Endothelial cell of umbilical vein (primary cell): ENCODE measurements at regions of chr6 and their contacts with region 1.

Region 1: GRCh38 chr6:157514659-157515496 is 133.9 kb downstream of the ZDHHC14 start:
- DNase-seq: peak; percentile 99
- H3K4me3 ChIP-seq: no peak overlapping the region
- H3K27ac ChIP-seq: peak overlapping the region; percentile 88
- H3K4me1 ChIP-seq: peaks cover 29% of the 10 kb centered on the region
- H3K27me3 ChIP-seq: no peaks in the 10 kb centered on the region
- CTCF ChIP-seq: no peak
- POLR2A ChIP-seq: peak; percentile 86

Region 2: DNA sequence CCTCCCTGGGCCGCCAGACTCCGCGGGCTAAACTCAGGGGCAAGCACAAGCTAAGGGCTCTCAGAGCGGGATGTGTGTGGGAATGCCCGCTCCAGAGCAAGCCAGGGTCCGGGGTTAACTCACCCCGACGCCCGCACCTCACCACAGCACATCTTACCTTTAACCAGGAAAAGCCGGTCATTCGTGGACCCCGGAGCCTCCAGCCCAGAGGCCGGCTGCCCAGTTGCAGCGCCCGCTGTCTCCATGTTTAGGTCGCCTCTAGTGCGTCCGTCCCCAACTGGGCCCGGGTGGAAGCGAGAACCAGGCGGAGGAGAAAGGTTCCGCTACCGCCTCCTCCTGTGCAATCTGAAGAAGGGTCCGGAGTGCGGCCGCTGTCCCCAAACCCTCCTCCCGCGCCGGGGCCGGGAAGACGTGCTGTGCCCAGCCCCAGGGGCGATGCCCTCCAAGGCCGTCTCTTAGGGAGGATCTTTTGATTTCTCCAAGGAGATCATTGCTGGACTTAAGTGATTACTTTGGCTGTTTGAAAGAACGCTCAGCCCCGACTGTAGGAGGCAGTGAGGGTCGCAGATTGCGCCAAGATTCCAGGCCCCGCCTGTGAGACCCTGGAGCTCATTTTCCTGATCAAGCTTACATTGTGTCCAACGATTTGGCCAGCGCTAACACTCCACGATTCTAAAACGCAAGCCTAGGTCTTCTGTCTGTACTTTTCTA is 191.5 kb before region 1 on chr6 and contains the start of gene TMEM242:
- CTCF ChIA-PET with region 1: interaction called, 4 read pairs
- POLR2A ChIA-PET with region 1: no interaction called
- dilution Hi-C with region 1: no loop called
- intact Hi-C with region 1: loop called (anchors 2 kb)
- DNase-seq: peak; percentile 98
- H3K4me3 ChIP-seq: peak within 1 kb of the TSS; percentile 70 to 89 (median 72)
- H3K27ac ChIP-seq: peak within 1 kb of the TSS; percentile 94
- H3K4me1 ChIP-seq: peaks cover 30% of the 10 kb centered on the region
- H3K27me3 ChIP-seq: no peaks in the 10 kb centered on the region
- CTCF ChIP-seq: peak in 1 of 2 donors; percentile 14
- POLR2A ChIP-seq: peak; percentile 98
- total RNA-seq, gene TMEM242: 15.3 and 15.5 TPM in 2 replicates

Region 3: GRCh38 chr6:157374889-157375443 is 139.9 kb before region 1 on chr6:
- CTCF ChIA-PET with region 1: no interaction called
- POLR2A ChIA-PET with region 1: no interaction called
- dilution Hi-C with region 1: no loop called
- intact Hi-C with region 1: no loop called
- DNase-seq: no peak
- H3K4me3 ChIP-seq: no peak overlapping the region
- H3K27ac ChIP-seq: no peak overlapping the region
- H3K4me1 ChIP-seq: peaks cover 4% of the 10 kb centered on the region
- H3K27me3 ChIP-seq: peaks cover 0 to 2% of the 10 kb centered on the region in 2 experiments
- CTCF ChIP-seq: no peak
- POLR2A ChIP-seq: no peak

Region 4: GRCh38 chr6:157461000-157461915 is 53.6 kb before region 1 on chr6:
- CTCF ChIA-PET with region 1: no interaction called
- POLR2A ChIA-PET with region 1: no interaction called
- dilution Hi-C with region 1: no loop called
- intact Hi-C with region 1: loop called (anchors 1 kb)
- DNase-seq: peak; percentile 84
- H3K4me3 ChIP-seq: no peak overlapping the region
- H3K27ac ChIP-seq: peak overlapping the region; percentile 72
- H3K4me1 ChIP-seq: peaks cover 24% of the 10 kb centered on the region
- H3K27me3 ChIP-seq: no peaks in the 10 kb centered on the region
- CTCF ChIP-seq: peak; percentile 31 to 52
- POLR2A ChIP-seq: no peak

Region 5: GRCh38 chr6:157530126-157530525 is 15.2 kb after region 1 on chr6:
- CTCF ChIA-PET with region 1: interaction called, 7 read pairs
- POLR2A ChIA-PET with region 1: no interaction called
- dilution Hi-C with region 1: no loop called
- intact Hi-C with region 1: loop called (anchors 1 kb)
- DNase-seq: peak; percentile 81
- H3K4me3 ChIP-seq: no peak overlapping the region
- H3K27ac ChIP-seq: no peak overlapping the region
- H3K4me1 ChIP-seq: peaks cover 40% of the 10 kb centered on the region
- H3K27me3 ChIP-seq: no peaks in the 10 kb centered on the region
- CTCF ChIP-seq: no peak
- POLR2A ChIP-seq: no peak

Region 6: GRCh38 chr6:157550114-157550989 is 35.5 kb after region 1 on chr6:
- CTCF ChIA-PET with region 1: no interaction called
- POLR2A ChIA-PET with region 1: no interaction called
- dilution Hi-C with region 1: no loop called
- intact Hi-C with region 1: no loop called
- DNase-seq: no peak
- H3K4me3 ChIP-seq: no peak overlapping the region
- H3K27ac ChIP-seq: no peak overlapping the region
- H3K4me1 ChIP-seq: no peaks in the 10 kb centered on the region
- H3K27me3 ChIP-seq: no peaks in the 10 kb centered on the region
- CTCF ChIP-seq: no peak
- POLR2A ChIP-seq: no peak

Region 7: DNA sequence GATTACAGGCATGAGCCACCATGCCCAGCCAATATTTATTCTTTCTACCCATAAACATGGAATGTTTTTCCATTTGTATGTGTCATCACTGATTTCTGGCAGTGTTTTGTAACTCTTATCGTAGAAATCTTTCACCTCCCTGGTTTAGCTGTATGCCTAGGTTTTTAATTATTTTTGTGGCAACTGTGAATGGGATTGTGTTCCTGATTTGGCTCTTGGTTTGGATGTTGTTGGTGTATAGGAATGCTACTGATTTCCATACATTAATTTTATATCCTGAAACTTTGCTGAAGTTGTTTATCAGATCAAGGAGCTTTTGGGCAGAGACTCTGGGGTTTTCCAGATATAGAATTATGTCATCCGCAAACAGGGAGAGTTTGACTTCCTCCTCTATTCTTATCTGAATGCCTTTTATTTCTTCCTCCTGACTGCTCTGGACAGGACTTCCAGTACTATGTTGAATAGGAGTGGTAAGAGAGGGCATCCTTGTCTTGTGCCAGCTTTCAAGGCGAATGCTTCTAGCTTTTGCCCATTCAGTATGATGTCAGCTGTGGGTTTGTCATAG is 64.7 kb after region 1 on chr6:
- CTCF ChIA-PET with region 1: no interaction called
- POLR2A ChIA-PET with region 1: no interaction called
- dilution Hi-C with region 1: no loop called
- intact Hi-C with region 1: loop called (anchors 1 kb)
- DNase-seq: peak; percentile 90
- H3K4me3 ChIP-seq: no peak overlapping the region
- H3K27ac ChIP-seq: peak overlapping the region; percentile 74
- H3K4me1 ChIP-seq: peaks cover 21% of the 10 kb centered on the region
- H3K27me3 ChIP-seq: no peaks in the 10 kb centered on the region
- CTCF ChIP-seq: no peak
- POLR2A ChIP-seq: no peak

Region 8: DNA sequence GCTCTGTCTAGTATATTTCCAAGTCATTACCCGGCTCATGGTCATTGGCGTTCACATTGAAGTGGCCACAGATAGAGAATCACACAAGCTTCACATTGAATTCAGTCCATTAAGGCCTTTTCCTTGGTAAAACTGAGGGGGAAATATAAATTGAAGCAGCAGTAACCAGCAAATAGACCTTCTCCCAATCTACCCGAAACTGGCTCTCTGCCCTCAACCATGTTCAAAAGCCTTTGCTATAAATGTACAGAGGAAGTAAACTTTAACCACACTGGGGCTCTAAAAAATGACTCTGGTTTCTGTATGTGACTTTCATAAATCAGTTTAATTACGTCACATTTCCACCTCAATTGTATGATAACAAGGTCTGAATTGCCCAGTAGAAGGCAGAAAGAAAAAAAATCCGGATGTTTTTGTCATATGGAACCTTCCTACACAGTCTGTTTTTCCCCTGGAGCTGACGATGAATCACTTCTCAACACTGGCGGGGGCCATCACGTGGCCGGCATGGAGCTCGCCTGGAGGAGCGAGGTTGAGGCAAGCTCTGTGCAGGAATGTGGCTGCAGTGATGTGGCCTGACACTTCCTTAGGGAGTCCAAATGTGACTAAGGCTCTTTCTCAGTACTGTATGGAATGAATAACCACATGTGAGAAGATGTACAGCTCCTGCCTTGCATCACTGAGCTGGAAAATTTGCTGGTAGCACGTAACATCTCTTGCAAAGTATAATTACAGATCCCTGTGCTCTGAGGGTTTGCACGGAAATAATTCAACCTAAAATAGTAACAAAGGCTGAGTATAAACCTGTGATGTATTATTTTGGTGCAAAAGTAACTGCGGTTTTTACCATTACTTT is 249.5 kb after region 1 on chr6:
- CTCF ChIA-PET with region 1: no interaction called
- POLR2A ChIA-PET with region 1: no interaction called
- dilution Hi-C with region 1: no loop called
- intact Hi-C with region 1: loop called (anchors 5 kb)
- DNase-seq: peak; percentile 99
- H3K4me3 ChIP-seq: peak overlapping the region in 1 of 3 experiments; percentile 4
- H3K27ac ChIP-seq: peak overlapping the region; percentile 97
- H3K4me1 ChIP-seq: peaks cover 51% of the 10 kb centered on the region
- H3K27me3 ChIP-seq: no peaks in the 10 kb centered on the region
- CTCF ChIP-seq: no peak
- POLR2A ChIP-seq: no peak